Mammary epithelial cell (primary cell): ENCODE measurements at regions of chr1 and their contacts with region 1.

Region 1: DNA sequence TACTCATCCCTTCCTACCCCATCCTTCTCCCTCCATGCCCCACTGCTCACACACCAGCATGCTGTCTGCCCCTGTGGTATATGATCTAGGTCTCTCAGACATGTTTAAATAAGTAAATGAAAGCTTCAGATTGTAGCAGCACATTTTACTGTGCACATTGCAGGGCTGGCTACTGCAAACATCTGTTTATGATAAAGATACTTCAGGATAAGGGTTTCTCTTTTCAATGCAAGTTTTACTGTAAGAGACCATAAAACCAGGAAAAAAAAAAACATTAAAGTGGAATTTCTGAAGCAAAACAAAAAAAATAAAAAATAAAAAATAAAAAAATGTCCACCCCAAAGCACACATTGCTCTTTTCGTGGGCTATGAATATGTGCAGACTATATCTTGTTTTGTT is 184.4 kb downstream of the USH2A start:
- DNase-seq: no peak
- H3K4me3 ChIP-seq: no peak overlapping the region
- H3K27ac ChIP-seq: no peak overlapping the region
- H3K4me1 ChIP-seq: no peaks in the 10 kb centered on the region
- H3K27me3 ChIP-seq: no peaks in the 10 kb centered on the region
- CTCF ChIP-seq: no peak

Region 2: DNA sequence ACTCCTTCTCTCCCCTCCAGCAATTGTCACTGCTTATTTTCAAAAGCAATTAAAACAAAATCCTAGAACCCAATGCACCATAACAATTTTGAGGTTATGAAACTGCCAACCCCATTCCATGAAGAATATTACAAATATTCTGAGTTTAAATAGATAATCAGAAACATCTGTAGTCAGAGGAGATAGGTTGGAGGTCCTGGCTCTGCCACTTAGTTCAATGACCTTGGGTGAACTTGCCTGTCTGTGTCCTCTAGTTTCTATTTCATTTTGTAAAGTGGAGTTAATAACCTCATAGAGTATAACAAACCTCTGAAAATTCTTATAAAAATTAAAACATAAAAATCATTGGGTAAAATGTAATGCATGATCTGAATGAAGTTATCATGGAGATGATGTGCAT is 507.1 kb before region 1 on chr1:
- CTCF ChIA-PET with region 1: no interaction called
- dilution Hi-C with region 1: no loop called
- in situ Hi-C with region 1: no loop called
- intact Hi-C with region 1: no loop called
- DNase-seq: no peak
- H3K4me3 ChIP-seq: no peak overlapping the region
- H3K27ac ChIP-seq: no peak overlapping the region
- H3K4me1 ChIP-seq: no peaks in the 10 kb centered on the region
- H3K27me3 ChIP-seq: no peaks in the 10 kb centered on the region
- CTCF ChIP-seq: no peak

Region 3: GRCh38 chr1:216075339-216075738 is 163.5 kb before region 1 on chr1:
- CTCF ChIA-PET with region 1: no interaction called
- dilution Hi-C with region 1: no loop called
- in situ Hi-C with region 1: no loop called
- intact Hi-C with region 1: no loop called
- DNase-seq: no peak
- H3K4me3 ChIP-seq: no peak overlapping the region
- H3K27ac ChIP-seq: no peak overlapping the region
- H3K4me1 ChIP-seq: no peaks in the 10 kb centered on the region
- H3K27me3 ChIP-seq: no peaks in the 10 kb centered on the region
- CTCF ChIP-seq: no peak

Region 4: DNA sequence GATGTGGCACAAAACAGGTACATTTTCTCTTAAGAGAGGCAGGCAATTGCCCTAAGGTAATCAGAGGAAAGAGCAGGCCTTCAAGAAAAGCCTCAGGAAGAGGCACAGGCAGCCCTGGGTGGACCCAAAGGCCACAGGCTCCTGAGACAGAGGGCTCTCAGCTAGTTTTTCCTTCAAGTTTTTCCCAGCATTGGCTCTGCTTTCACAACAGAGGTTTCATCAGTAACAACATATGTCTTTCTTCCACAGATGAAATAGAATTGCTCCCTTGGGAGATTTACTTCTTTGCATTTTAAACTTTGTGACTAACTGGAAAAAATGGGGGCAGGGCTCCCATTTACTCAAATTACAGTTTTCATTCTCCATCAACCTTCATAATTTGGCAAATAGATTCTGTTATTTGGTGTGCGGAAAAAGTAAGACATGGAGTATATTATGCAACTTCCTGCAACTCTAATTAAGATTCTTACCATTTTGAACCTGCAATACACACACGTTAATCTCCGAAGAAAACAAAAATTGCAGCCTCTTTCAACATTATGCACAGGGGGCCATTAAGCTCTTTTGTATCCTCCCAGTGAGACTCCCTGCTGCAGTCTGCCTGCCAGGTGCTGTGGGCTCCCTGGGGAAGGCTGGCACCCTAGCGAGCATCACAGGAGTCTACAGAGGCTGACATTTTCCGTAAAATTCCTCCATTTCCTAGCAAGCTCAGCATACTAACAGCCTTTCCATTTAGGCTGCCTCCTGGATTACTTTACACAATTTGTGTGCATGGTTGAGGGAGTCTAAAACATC is 97.9 kb before region 1 on chr1:
- CTCF ChIA-PET with region 1: no interaction called
- dilution Hi-C with region 1: no loop called
- in situ Hi-C with region 1: no loop called
- intact Hi-C with region 1: no loop called
- DNase-seq: no peak
- H3K4me3 ChIP-seq: no peak overlapping the region
- H3K27ac ChIP-seq: no peak overlapping the region
- H3K4me1 ChIP-seq: no peaks in the 10 kb centered on the region
- H3K27me3 ChIP-seq: no peaks in the 10 kb centered on the region
- CTCF ChIP-seq: no peak

Region 5: DNA sequence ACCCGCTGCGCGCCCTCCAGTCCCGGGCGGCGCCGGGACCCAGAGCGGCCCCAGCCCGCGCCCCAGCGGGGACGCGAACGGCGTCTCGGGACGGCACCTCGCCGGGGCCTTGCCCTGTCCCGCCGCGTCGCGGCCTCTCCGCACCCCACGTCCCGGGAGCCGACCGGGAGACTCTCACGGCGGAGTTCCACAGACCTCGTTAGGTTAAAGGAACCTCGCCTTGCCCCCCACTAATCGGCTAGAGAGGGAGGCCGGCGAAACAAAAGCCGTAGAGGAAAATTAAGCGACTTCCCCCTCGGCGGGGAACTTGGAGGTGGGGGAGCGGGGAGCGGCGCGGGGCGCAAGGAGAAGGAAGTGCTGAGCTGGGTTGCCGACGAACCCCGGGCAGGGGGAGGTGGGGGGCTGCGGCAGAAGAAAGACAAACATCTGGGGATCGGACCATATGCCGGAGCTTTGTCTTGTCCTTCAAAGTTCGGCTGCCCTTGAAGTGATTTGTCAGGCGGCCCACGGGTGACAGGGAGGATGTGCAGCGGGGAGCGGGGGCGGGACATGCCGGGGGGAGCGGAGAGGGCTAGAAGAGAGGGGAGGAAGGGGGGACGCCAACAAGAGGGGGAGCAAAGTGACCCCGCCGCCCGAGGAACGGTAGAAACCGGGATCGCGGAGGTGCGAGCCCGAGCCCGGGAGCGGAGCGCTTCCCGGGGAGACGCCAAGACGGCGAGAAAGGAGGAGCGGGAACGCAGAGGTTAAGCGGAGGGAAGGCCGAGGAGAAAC is 1926.3 kb after region 1 on chr1:
- CTCF ChIA-PET with region 1: no interaction called
- dilution Hi-C with region 1: no loop called
- in situ Hi-C with region 1: no loop called
- intact Hi-C with region 1: loop called (anchors 5 kb)
- DNase-seq: no peak
- H3K4me3 ChIP-seq: peak overlapping the region; percentile 14 to 41 (median 34)
- H3K27ac ChIP-seq: no peak overlapping the region
- H3K4me1 ChIP-seq: peaks cover 16% of the 10 kb centered on the region
- H3K27me3 ChIP-seq: peaks cover 45% of the 10 kb centered on the region
- CTCF ChIP-seq: no peak